ENCODE measurements at regions of chr5 and their contacts with region 1.

Region 1: GRCh38 chr5:42351956-42352355 is 71.3 kb upstream of the GHR start:
- DNase-seq: no peak
- ATAC-seq: peak; percentile 30

Region 2: DNA sequence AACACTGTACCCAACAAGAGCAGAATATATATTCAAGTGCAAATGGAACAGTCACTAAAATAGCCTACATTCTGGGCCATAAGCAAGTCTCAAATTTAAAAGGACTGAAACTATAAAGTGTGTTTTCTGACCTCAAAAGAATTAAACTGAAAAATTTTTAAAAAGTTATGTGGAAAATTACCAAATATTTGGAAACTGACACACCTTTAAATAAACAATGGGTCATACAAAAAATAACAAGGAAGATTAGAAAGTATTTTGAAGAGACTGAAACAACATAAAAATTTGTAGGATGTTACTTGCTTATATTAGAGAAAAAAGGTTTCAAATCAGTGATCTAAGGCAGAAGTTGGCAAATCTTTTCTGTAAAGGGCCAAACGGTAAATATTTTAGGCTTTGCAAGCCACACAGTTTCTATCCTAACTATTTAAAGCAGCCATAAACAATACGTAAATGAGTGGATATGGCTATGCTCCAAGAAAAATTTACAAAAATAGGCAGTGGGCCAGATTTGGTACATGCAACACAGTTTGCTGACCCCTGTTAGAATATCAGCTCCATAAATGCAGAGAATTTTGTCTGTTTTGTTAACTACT is 563.1 kb before region 1 on chr5:
- intact Hi-C with region 1: no loop called
- DNase-seq: no peak
- ATAC-seq: no peak

Region 3: GRCh38 chr5:42306287-42306686 is 45.7 kb before region 1 on chr5:
- intact Hi-C with region 1: loop called (anchors 1 kb)
- DNase-seq: no peak
- ATAC-seq: peak; percentile 90